ENCODE measurements at regions of chr14 and their contacts with region 1.

Region 1: GRCh38 chr14:24299255-24300195 is at the starts of genes DHRS1 and NOP9:
- DNase-seq: peak; percentile 94
- ATAC-seq: peak; percentile 76
- H3K4me3 Mint-ChIP-seq: peak within 1 kb of the TSS; percentile 89
- H3K27ac Mint-ChIP-seq: peak within 1 kb of the TSS; percentile 88
- H3K4me1 Mint-ChIP-seq: peaks cover 40% of the 10 kb centered on the region
- H3K27me3 Mint-ChIP-seq: no peaks in the 10 kb centered on the region
- CTCF ChIP-seq: no peak
- total RNA-seq, gene DHRS1: 11.9 to 13.6 TPM
- total RNA-seq, gene NOP9: 33.5 to 33.6 TPM

Region 2: GRCh38 chr14:24215495-24216344 is 83.8 kb before region 1 on chr14 and contains the start of gene MDP1:
- CTCF ChIA-PET with region 1: interaction called, 25 read pairs
- POLR2A ChIA-PET with region 1: interaction called, 7 read pairs
- intact Hi-C with region 1: no loop called
- DNase-seq: peak; percentile 91
- ATAC-seq: peak; percentile 74
- H3K4me3 Mint-ChIP-seq: peak within 1 kb of the TSS; percentile 97
- H3K27ac Mint-ChIP-seq: peak within 1 kb of the TSS; percentile 98
- H3K4me1 Mint-ChIP-seq: peaks cover 40% of the 10 kb centered on the region
- H3K27me3 Mint-ChIP-seq: no peaks in the 10 kb centered on the region
- CTCF ChIP-seq: peak; percentile 45
- total RNA-seq, gene MDP1: 11.2 to 11.3 TPM

Region 3: GRCh38 chr14:24232121-24232644 is 67.3 kb before region 1 on chr14 and contains the start of gene NEDD8:
- CTCF ChIA-PET with region 1: interaction called, 873 read pairs
- POLR2A ChIA-PET with region 1: interaction called, 8 read pairs
- intact Hi-C with region 1: no loop called
- DNase-seq: peak; percentile 94
- ATAC-seq: peak; percentile 90
- H3K4me3 Mint-ChIP-seq: peak within 1 kb of the TSS; percentile 93
- H3K27ac Mint-ChIP-seq: peak within 1 kb of the TSS; percentile 96
- H3K4me1 Mint-ChIP-seq: peaks cover 40% of the 10 kb centered on the region
- H3K27me3 Mint-ChIP-seq: no peaks in the 10 kb centered on the region
- CTCF ChIP-seq: no peak
- total RNA-seq, gene NEDD8: 167 to 172 TPM

Region 4: GRCh38 chr14:24271134-24271833 is 28.2 kb before region 1 on chr14 and contains the start of gene RABGGTA:
- CTCF ChIA-PET with region 1: interaction called, 46 read pairs
- POLR2A ChIA-PET with region 1: interaction called, 11 read pairs
- intact Hi-C with region 1: no loop called
- DNase-seq: peak; percentile 92
- ATAC-seq: peak; percentile 85
- H3K4me3 Mint-ChIP-seq: peak within 1 kb of the TSS; percentile 82
- H3K27ac Mint-ChIP-seq: peak within 1 kb of the TSS; percentile 94
- H3K4me1 Mint-ChIP-seq: peaks cover 39% of the 10 kb centered on the region
- H3K27me3 Mint-ChIP-seq: no peaks in the 10 kb centered on the region
- CTCF ChIP-seq: peak; percentile 77
- total RNA-seq, gene RABGGTA: 37.6 to 42.7 TPM

Region 5: GRCh38 chr14:24279301-24280186 is 20.0 kb before region 1 on chr14:
- CTCF ChIA-PET with region 1: interaction called, 85 read pairs
- POLR2A ChIA-PET with region 1: interaction called, 14 read pairs
- intact Hi-C with region 1: no loop called
- DNase-seq: peak; percentile 76
- ATAC-seq: peak; percentile 88
- H3K4me3 Mint-ChIP-seq: no peak overlapping the region
- H3K27ac Mint-ChIP-seq: peak overlapping the region; percentile 77
- H3K4me1 Mint-ChIP-seq: peaks cover 44% of the 10 kb centered on the region
- H3K27me3 Mint-ChIP-seq: no peaks in the 10 kb centered on the region
- CTCF ChIP-seq: peak; percentile 53

Region 6: GRCh38 chr14:24377657-24378056 is 78.1 kb after region 1 on chr14:
- CTCF ChIA-PET with region 1: no interaction called
- POLR2A ChIA-PET with region 1: no interaction called
- intact Hi-C with region 1: no loop called
- DNase-seq: no peak
- ATAC-seq: no peak
- H3K4me3 Mint-ChIP-seq: no peak overlapping the region
- H3K27ac Mint-ChIP-seq: no peak overlapping the region
- H3K4me1 Mint-ChIP-seq: no peaks in the 10 kb centered on the region
- H3K27me3 Mint-ChIP-seq: no peaks in the 10 kb centered on the region
- CTCF ChIP-seq: no peak

Region 7: DNA sequence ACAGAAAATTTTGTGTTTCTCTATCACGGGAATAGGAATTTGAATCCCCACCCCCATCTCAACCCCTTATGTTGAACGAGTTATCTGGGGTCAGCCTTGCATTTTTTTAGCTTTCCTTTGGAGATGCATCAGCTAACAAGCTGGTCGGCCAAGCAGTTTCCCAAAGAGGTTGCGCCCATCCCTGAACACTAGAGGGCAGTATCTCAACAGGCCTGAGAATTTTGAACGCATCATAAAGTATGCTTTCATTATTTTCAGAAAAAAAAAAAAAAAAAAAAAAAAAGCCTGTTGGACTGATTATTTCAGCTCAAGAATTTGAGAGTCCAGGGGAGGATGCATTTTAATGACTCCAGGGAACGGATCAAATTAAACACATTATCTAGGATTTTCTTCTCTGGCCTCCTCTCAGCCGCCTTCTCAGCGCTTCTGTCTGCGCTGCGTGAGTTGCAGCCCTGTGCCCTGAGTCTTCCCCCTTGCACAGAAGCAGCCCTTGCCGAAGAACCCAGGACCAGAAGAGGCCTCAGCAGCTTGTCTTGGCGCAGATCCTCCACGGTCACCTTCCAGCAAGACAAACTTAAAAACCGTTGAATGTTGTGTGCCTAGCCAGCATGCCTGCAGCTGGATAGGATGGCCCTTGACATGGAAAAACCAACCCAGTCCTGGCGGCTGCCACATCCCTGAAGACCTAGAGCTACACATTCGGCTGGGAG is 411.0 kb after region 1 on chr14:
- CTCF ChIA-PET with region 1: no interaction called
- POLR2A ChIA-PET with region 1: no interaction called
- intact Hi-C with region 1: no loop called
- DNase-seq: peak; percentile 76
- ATAC-seq: peak; percentile 84
- H3K4me3 Mint-ChIP-seq: no peak overlapping the region
- H3K27ac Mint-ChIP-seq: no peak overlapping the region
- H3K4me1 Mint-ChIP-seq: peaks cover 2% of the 10 kb centered on the region
- H3K27me3 Mint-ChIP-seq: peaks cover 2% of the 10 kb centered on the region
- CTCF ChIP-seq: peak; percentile 80

Measured in activated CD8-positive, alpha-beta T cell treated with anti-CD3 and anti-CD28 coated beads for 36 hours (primary cell).